HEK293T (cell line): ENCODE measurements at regions of chr17 and their contacts with region 1.

Region 1: DNA sequence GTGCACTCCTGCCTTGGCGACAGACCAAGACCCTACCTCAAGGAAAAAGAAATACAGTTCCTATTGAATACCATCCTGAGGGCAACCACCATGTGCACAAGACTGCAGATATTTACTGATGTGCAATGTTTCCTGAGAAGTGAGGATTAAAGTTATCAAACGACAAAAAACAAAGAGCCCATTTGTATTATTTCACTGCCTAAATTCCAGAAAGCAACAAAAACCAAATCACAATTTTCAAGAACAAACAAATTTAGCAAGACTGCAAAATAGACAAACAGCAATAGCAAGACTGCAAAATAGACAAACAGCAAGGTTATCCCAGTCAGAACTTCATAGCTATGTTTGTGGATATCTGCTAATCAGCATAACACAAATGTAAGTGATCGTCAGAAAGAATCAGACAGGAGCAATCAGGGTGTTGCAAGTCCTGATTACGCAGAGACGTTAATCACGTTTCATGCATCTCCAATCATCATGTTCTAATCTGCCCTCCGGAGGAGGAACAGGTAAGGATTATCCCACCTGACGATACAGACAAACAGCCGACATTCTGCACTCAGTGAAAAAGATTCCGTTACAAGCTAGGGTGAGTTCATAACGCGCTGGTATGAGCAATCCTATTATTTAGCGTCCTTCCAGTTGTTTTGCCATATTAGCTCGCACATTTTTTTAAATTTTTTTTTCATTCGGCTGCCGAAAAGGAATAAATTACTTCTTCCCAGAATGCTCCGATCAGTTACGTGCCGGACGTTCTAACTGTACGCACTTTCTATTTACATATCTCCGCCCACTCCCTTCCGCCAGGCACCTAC is 2.9 kb downstream of the TMEM107 start:
- DNase-seq: peak; percentile 79

Region 2: GRCh38 chr17:8125157-8125946 is 47.9 kb before region 1 on chr17:
- CTCF ChIA-PET with region 1: interaction called, 4 read pairs
- POLR2A ChIA-PET with region 1: interaction called, 22 read pairs
- DNase-seq: peak; percentile 73

Region 3: GRCh38 chr17:8156246-8156992 is 16.8 kb before region 1 on chr17:
- CTCF ChIA-PET with region 1: interaction called, 3 read pairs
- POLR2A ChIA-PET with region 1: interaction called, 27 read pairs
- DNase-seq: peak; percentile 90

Region 4: GRCh38 chr17:8189711-8190477 is 16.6 kb after region 1 on chr17 and contains the start of gene BORCS6:
- CTCF ChIA-PET with region 1: no interaction called
- POLR2A ChIA-PET with region 1: interaction called, 32 read pairs
- DNase-seq: peak; percentile 81

Region 5: GRCh38 chr17:8222630-8223356 is 49.5 kb after region 1 on chr17:
- CTCF ChIA-PET with region 1: interaction called, 3 read pairs
- POLR2A ChIA-PET with region 1: interaction called, 19 read pairs
- DNase-seq: peak; percentile 64

Region 6: DNA sequence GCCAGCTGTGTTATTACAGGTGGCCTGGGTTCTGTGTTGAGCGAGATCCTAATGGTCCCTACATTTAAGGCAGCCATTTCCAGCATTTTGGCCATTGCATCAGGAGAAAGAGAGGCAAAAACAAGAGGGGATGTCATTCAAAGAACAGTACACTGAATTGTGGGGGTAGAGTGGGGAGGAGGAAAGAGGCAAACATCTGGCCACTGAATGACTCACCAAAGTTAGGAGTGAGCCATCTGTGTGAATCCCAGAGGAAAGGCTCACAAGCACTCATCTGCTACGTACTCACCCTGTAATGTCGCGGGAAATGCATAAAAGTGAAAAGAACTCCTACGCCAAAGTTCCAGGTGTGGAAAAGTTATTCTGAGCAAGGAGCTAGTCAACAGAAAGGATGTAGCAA is 186.5 kb after region 1 on chr17:
- CTCF ChIA-PET with region 1: no interaction called
- POLR2A ChIA-PET with region 1: no interaction called
- DNase-seq: no peak